Aorta (tissue), 5 donors: ENCODE measurements at regions of chr17 and their contacts with region 1.

Region 1: DNA sequence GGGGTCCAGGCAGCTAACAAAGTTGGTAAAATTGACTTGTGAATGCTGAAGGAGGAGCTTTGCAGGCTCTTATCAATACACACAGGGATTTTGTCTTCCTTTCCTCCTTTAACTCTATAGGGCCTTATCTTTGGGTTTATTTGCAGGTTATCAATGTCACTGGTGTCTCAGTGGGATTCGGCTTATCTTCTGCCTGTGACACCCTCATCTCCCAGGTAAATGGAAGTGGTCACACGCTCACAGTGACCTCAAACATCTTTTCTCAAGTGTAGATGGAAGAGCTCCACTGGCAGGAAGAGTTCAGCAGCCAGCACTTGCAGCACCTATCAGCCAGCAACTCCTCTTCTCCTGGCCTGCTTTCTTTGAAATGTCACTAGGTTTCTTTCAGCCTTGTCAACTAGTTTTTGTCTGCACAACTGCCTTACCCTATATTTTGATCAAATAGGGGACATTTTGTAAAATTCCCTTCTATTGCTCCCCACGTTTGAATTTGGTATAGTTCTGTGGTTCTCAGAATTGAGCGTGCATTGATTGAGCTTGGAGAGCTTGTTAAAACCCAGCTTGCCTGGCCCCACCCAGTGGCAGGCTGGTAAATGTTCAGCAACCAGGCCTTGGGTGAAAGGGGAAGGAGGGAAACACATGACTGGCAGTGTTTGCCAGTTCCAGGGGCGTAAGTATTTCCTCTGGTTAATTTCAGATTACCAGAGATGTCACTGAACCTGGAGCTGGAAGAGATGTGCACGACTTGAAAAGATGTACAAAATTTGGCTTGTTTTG is 12.8 kb downstream of the SLC47A1 start:
- DNase-seq: peak; percentile 66 to 78
- ATAC-seq: no peak
- H3K4me3 ChIP-seq: no peak overlapping the region
- H3K27ac ChIP-seq: no peak overlapping the region
- H3K4me1 ChIP-seq: no peaks in the 10 kb centered on the region
- H3K27me3 ChIP-seq: no peaks in the 10 kb centered on the region

Region 2: GRCh38 chr17:19513897-19514488 is 32.5 kb before region 1 on chr17:
- intact Hi-C with region 1: loop called in 1 of 2 experiments (anchors 5 kb)
- DNase-seq: peak; percentile 75 to 86
- ATAC-seq: peak; percentile 90
- H3K4me3 ChIP-seq: no peak overlapping the region
- H3K27ac ChIP-seq: peak overlapping the region; percentile 71 to 88
- H3K4me1 ChIP-seq: no peaks in the 10 kb centered on the region
- H3K27me3 ChIP-seq: no peaks in the 10 kb centered on the region

Region 3: GRCh38 chr17:19579867-19580565 is 33.5 kb after region 1 on chr17:
- intact Hi-C with region 1: no loop called
- DNase-seq: peak in 1 of 2 donors; percentile 83
- ATAC-seq: peak; percentile 62
- H3K4me3 ChIP-seq: peak overlapping the region; percentile 15 to 48
- H3K27ac ChIP-seq: no peak overlapping the region
- H3K4me1 ChIP-seq: no peaks in the 10 kb centered on the region
- H3K27me3 ChIP-seq: no peaks in the 10 kb centered on the region